ENCODE measurements at regions of chr17 and their contacts with region 1.

Region 1: GRCh38 chr17:49763735-49764558 is at the start of gene FAM117A:
- DNase-seq: peak; percentile 98
- H3K4me3 Mint-ChIP-seq: peak within 1 kb of the TSS; percentile 96
- H3K27ac Mint-ChIP-seq: peak within 1 kb of the TSS; percentile 92
- H3K4me1 Mint-ChIP-seq: peaks cover 52% of the 10 kb centered on the region
- H3K27me3 Mint-ChIP-seq: peaks cover 29% of the 10 kb centered on the region
- total RNA-seq, gene FAM117A: 10.9 and 11.1 TPM in 2 replicates

Region 2: DNA sequence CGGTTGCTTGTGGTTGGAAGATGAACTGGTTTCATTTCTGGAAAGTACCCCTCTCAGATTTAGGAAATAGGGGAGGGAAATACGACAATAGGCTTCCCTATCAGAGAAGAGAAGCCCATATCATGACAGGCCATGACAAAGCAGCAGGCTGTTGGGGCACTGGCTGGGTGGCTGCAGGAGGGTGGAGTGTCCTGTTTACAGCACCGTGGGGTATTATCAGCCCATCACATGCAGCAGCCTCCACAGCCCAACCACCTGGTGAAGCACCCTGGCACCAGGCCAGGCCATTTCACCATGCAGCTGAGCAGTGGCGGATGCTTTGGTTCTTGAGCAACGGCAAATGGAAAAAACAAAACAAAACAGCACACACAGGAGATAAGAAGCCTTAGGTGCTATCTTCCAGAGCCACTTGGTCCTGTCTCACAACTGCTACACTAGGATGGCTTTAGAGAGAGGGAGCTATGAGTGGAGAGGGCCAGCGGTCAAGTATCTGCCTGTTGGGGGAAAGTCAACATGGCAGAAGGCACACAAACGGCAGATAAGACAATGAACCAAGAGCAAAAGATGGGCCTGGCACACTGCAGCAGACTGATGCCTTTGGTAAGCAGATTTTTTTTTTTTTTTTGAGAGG is 24.2 kb before region 1 on chr17:
- intact Hi-C with region 1: loop called (anchors 1 kb)
- DNase-seq: peak; percentile 96
- H3K4me3 Mint-ChIP-seq: peak overlapping the region; percentile 87
- H3K27ac Mint-ChIP-seq: peak overlapping the region; percentile 99
- H3K4me1 Mint-ChIP-seq: peaks cover 66% of the 10 kb centered on the region
- H3K27me3 Mint-ChIP-seq: no peaks in the 10 kb centered on the region

Region 3: GRCh38 chr17:49748791-49749190 is 15.2 kb before region 1 on chr17:
- intact Hi-C with region 1: loop called (anchors 2 kb)
- DNase-seq: peak; percentile 82
- H3K4me3 Mint-ChIP-seq: peak overlapping the region; percentile 81
- H3K27ac Mint-ChIP-seq: peak overlapping the region; percentile 94
- H3K4me1 Mint-ChIP-seq: peaks cover 64% of the 10 kb centered on the region
- H3K27me3 Mint-ChIP-seq: no peaks in the 10 kb centered on the region